ENCODE measurements at regions of chr3 and their contacts with region 1.

Region 1: DNA sequence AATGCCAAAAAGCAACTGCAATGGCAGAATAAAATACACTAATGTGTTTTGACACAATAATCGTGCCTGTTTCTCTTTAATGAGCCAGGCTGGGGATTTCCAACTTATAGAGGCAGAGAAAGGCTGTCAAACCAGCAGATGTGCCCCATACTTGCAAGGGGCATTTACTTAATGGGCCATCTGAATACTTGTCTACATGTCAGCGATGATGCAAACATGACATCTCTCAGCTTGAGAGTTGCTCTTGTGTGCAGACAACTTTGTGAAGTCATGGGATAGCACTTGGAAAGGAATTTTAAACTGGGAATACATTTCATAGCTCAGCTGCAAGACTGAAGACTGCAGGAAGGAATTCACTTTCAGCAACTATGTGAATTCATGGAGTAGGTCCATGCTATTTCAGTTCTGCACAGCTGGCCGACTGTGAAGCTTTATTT is 127.4 kb upstream of the ADAMTS9 start:
- DNase-seq: no peak
- CTCF ChIP-seq: no peak

Region 2: GRCh38 chr3:64827431-64827830 is 12.2 kb after region 1 on chr3:
- CTCF ChIA-PET with region 1: interaction called, 10 read pairs
- POLR2A ChIA-PET with region 1: no interaction called
- DNase-seq: no peak
- CTCF ChIP-seq: no peak

Measured in GM10248 (cell line).